A673 (cell line): ENCODE measurements at regions of chr15 and their contacts with region 1.

Region 1: GRCh38 chr15:57720867-57721266 is 14.4 kb downstream of the POLR2M start:
- DNase-seq: no peak
- H3K4me3 ChIP-seq: no peak overlapping the region
- H3K27ac ChIP-seq: no peak overlapping the region
- H3K4me1 ChIP-seq: peaks cover 6% of the 10 kb centered on the region
- H3K27me3 ChIP-seq: no peaks in the 10 kb centered on the region
- CTCF ChIP-seq: no peak

Region 2: GRCh38 chr15:57445872-57446271 is 275.0 kb before region 1 on chr15:
- CTCF ChIA-PET with region 1: no interaction called
- POLR2A ChIA-PET with region 1: no interaction called
- intact Hi-C with region 1: no loop called
- DNase-seq: peak; percentile 45
- H3K4me3 ChIP-seq: no peak overlapping the region
- H3K27ac ChIP-seq: peak overlapping the region; percentile 6
- H3K4me1 ChIP-seq: peaks cover 15% of the 10 kb centered on the region
- H3K27me3 ChIP-seq: no peaks in the 10 kb centered on the region
- CTCF ChIP-seq: no peak

Region 3: DNA sequence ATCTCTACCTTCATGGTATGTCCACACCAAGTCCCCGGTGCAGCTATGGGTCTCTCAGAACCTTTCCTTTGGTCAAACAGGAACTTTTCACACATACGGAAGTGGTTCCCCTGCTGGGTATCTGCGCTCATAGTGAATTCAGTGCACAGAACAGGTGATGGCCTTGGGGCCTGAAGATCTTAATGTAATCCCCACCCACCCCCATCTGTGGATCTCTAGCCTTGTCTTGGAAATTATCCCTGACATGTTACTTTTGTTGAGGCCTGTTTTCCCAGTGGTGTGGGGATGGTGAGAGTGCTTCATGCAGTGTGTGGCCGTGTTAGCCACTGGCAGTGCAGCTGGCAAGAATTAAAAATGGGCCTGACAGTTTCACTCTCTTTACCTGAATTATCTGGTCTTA is 201.1 kb before region 1 on chr15:
- CTCF ChIA-PET with region 1: interaction called, 13 read pairs
- POLR2A ChIA-PET with region 1: no interaction called
- intact Hi-C with region 1: no loop called
- DNase-seq: no peak
- H3K4me3 ChIP-seq: no peak overlapping the region
- H3K27ac ChIP-seq: no peak overlapping the region
- H3K4me1 ChIP-seq: no peaks in the 10 kb centered on the region
- H3K27me3 ChIP-seq: no peaks in the 10 kb centered on the region
- CTCF ChIP-seq: no peak

Region 4: GRCh38 chr15:57611938-57612337 is 108.9 kb before region 1 on chr15:
- CTCF ChIA-PET with region 1: no interaction called
- POLR2A ChIA-PET with region 1: no interaction called
- intact Hi-C with region 1: no loop called
- DNase-seq: no peak
- H3K4me3 ChIP-seq: no peak overlapping the region
- H3K27ac ChIP-seq: no peak overlapping the region
- H3K4me1 ChIP-seq: no peaks in the 10 kb centered on the region
- H3K27me3 ChIP-seq: no peaks in the 10 kb centered on the region
- CTCF ChIP-seq: no peak